A673 (cell line): ENCODE measurements at regions of chr7 and their contacts with region 1.

Region 1: GRCh38 chr7:74299401-74299800 is 10.2 kb downstream of the CLIP2 start:
- DNase-seq: no peak
- H3K4me3 ChIP-seq: no peak overlapping the region
- H3K27ac ChIP-seq: no peak overlapping the region
- H3K4me1 ChIP-seq: peaks cover 6% of the 10 kb centered on the region
- H3K27me3 ChIP-seq: no peaks in the 10 kb centered on the region
- CTCF ChIP-seq: no peak

Region 2: GRCh38 chr7:74388880-74389415 is 89.5 kb after region 1 on chr7:
- CTCF ChIA-PET with region 1: no interaction called
- POLR2A ChIA-PET with region 1: interaction called, 10 read pairs
- intact Hi-C with region 1: no loop called
- DNase-seq: no peak
- H3K4me3 ChIP-seq: no peak overlapping the region
- H3K27ac ChIP-seq: no peak overlapping the region
- H3K4me1 ChIP-seq: no peaks in the 10 kb centered on the region
- H3K27me3 ChIP-seq: no peaks in the 10 kb centered on the region
- CTCF ChIP-seq: no peak